Activated naive CD8-positive, alpha-beta T cell treated with anti-CD3 and anti-CD28 coated beads, Interleukin-2, amount 10 ng/mL, durations not matched to agents 7 days and 5 days (primary cell): ENCODE measurements at regions of chr10 and their contacts with region 1.

Region 1: DNA sequence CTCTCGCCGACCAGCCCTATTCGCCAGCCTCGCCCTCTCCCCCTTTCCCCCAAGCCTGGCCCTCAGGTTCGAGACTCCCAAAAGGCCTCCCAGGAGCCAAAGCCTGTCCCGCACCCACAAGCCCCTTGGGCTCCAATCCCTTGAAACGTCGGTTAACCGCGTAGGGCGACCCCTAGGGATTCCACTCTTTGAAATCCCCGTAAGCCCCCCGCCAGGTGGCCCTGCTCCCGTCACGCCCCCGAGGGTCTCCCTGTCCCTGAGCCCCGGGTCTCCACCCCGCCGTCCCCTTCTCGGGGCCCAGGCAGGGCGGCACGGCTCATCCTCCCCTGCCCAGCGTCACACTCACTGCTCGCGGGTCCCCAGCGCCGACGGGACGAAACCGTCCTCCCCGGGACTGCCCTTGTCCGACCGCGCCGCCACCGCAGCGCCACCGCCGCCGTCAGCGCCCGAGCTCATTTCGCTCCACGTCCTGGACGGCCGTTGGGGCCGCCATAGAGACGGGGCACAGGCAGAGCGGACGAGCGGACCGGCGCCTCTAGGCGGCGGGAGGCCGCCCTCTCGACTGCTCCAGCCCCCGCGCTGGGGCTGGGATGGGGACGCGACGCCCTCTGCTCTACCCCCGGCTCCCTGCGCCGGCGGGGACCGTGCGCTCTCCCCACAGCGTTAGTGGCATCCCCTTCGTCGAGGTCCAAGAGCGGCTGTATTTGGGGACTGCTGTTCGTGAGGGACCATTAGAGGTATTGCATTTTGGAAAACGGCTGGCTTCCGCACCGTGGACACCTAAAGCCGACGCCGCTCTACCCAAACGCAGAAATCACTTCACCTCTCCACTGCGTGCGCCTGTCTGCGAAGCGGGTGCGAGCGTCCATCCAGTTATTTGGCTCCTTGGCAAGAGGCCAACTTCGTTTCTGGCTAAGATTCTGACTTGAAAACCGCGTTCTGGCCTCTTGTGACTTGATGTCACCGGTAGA is at the start of gene EEF1AKMT2:
- DNase-seq: peak; percentile 89
- ATAC-seq: peak; percentile 95
- H3K4me3 Mint-ChIP-seq: peak within 1 kb of the TSS; percentile 97
- H3K27ac Mint-ChIP-seq: peak within 1 kb of the TSS; percentile 98
- H3K4me1 Mint-ChIP-seq: peaks cover 18% of the 10 kb centered on the region
- H3K27me3 Mint-ChIP-seq: no peaks in the 10 kb centered on the region
- total RNA-seq, gene EEF1AKMT2: 22.0 to 22.8 TPM

Region 2: GRCh38 chr10:124748166-124748565 is 43.5 kb before region 1 on chr10:
- POLR2A ChIA-PET with region 1: interaction called, 13 read pairs
- DNase-seq: no peak
- ATAC-seq: no peak
- H3K4me3 Mint-ChIP-seq: no peak overlapping the region
- H3K27ac Mint-ChIP-seq: no peak overlapping the region
- H3K4me1 Mint-ChIP-seq: peaks cover 16% of the 10 kb centered on the region
- H3K27me3 Mint-ChIP-seq: no peaks in the 10 kb centered on the region

Region 3: DNA sequence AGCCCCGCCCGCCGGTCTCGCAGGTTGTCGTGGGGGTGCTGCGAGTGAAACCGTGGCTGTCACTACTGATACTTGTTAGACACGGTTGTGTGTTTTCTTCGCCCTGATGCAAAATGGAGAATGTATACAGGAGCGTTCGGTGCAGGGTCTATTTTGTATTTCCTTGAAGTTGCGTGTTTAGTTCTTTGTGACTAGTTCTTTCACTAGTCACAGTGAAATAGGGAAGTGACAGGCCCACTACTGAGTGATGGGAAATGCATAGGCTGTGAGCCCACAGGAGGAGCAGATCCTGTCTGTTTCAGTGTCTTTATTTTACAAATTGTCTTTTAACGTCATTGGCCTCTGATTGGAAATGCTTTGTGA is 10.6 kb after region 1 on chr10:
- POLR2A ChIA-PET with region 1: interaction called, 26 read pairs
- DNase-seq: no peak
- ATAC-seq: peak; percentile 0
- H3K4me3 Mint-ChIP-seq: peak overlapping the region; percentile 96
- H3K27ac Mint-ChIP-seq: peak overlapping the region; percentile 86
- H3K4me1 Mint-ChIP-seq: peaks cover 14% of the 10 kb centered on the region
- H3K27me3 Mint-ChIP-seq: peaks cover 5% of the 10 kb centered on the region